GM10248 (cell line): ENCODE measurements at regions of chr1 and their contacts with region 1.

Region 1: DNA sequence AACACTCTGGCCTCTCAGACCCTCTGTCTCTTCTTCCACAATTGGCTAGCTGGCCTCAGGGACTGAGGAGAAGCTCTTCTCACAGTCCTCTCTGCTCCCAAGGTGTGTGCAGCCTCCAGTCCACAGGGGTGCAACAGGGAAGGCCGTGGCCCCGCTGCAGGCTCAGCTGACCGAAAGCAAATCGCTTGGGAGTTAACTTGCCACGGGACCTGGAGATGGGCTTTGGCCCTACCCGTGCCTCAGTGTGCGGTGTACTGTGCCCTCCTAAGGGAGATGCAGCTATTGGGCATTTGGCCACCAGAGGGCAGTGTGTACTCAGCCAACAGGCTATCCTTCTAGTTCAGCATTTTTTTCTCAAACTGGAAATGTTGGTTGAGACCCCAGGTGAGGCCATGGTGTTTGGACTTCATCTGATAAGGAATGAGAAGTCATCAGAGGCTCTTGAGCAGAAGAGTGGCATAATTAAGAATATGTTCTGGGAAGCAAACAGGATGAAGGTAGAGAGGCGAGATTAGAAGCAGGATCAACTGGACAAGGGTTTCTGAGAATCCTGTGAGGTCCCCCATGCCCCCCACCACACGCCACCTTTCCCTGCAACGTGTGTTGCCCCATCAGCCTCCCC is 42.5 kb upstream of the TMEM125 start:
- DNase-seq: peak; percentile 82
- CTCF ChIP-seq: peak; percentile 90

Region 2: DNA sequence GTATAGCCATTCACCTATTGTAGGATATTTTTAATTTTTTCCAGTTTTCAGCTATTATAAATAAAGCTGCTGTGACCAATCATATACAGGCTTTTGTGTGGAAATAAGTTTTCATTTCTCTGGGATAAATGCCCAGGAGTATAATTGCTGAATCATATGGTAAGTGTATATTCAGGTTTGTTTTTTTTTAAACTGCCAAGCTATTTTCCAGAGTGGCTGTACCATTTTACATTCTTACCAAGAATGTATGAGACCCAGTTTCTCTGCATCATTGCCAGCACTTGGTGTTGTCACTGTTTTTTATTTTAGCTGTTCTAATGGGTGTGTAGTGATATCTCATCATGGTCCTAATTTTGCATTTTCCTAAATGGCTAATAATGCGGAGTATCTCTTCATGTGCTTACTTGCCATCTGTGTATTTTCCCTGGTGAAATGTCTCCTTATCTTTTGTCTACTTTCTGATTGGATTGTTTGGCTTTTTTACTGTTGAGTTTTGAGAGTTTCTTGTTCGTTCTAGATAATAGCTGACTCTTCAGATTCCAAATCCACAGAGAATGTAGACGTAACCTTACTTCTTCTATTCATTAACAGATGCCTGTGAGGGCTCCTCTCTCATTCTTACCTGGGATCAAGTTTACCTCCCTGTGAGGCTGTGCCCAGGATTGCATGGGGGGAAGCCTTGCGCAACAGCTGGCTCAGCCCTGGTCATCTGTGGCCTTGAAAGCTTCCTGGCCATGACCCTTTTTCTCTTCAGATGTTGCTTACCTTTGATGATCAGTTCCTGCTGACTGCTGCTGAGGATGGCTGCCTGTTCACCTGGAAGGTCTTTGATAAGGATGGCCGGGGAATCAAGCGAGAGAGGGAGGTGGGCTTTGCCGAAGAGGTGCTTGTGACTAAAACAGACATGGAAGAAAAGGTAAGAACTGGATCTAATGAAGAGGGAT is 12.5 kb before region 1 on chr1:
- CTCF ChIA-PET with region 1: interaction called, 11 read pairs
- POLR2A ChIA-PET with region 1: no interaction called
- DNase-seq: no peak
- CTCF ChIP-seq: no peak

Region 3: DNA sequence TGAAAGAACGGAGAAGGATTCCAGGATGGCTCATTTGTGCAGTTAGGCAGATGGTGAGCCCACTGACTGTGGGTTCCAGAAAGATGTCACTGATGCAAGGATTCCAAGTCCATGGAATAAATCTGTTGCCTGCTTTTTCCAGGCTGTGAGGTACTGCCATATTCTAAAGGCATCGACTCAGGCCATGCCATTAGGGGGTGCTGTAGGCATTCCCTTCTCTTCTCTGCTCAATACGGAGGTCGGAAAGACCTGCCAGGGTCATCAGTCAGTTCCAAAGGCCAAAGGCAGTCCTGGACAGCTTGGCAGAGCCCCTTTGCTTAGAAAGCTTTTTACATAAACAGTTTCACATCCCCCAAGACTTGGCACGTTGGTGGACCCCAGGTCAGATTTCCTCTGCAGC is 10.8 kb after region 1 on chr1:
- CTCF ChIA-PET with region 1: interaction called, 32 read pairs
- POLR2A ChIA-PET with region 1: no interaction called
- DNase-seq: peak; percentile 68
- CTCF ChIP-seq: peak; percentile 79

Region 4: GRCh38 chr1:43358746-43359693 is 131.8 kb after region 1 on chr1 and contains the start of gene CDC20:
- CTCF ChIA-PET with region 1: interaction called, 12 read pairs
- POLR2A ChIA-PET with region 1: interaction called, 4 read pairs
- DNase-seq: peak; percentile 97
- CTCF ChIP-seq: no peak

Region 5: GRCh38 chr1:43414634-43415223 is 187.5 kb after region 1 on chr1:
- CTCF ChIA-PET with region 1: interaction called, 41 read pairs
- POLR2A ChIA-PET with region 1: no interaction called
- DNase-seq: peak; percentile 40
- CTCF ChIP-seq: peak; percentile 37